ENCODE measurements at regions of chr2 and their contacts with region 1.

Region 1: GRCh38 chr2:231965102-231965501 is 3.6 kb downstream of the DIS3L2 start:
- DNase-seq: no peak

Region 2: DNA sequence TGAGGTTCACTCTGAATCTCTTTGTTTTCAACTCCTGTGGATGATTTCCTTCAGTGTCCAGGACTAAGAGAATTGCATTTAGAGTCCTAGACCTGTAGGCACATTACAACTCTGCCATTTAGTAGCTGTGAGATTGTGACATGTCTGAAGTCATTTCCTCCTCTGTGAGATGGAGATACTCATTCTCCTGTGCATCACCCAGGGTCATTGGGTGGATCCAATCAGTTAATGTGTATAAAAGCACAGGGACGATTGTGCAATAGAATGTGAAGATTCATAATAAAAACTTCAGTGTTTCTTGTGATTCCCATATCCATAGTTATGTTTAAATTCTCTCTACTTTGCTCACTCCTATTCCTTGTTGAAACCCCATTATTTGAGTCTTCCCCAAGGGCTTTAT is 110.0 kb after region 1 on chr2:
- intact Hi-C with region 1: no loop called
- DNase-seq: no peak

Region 3: DNA sequence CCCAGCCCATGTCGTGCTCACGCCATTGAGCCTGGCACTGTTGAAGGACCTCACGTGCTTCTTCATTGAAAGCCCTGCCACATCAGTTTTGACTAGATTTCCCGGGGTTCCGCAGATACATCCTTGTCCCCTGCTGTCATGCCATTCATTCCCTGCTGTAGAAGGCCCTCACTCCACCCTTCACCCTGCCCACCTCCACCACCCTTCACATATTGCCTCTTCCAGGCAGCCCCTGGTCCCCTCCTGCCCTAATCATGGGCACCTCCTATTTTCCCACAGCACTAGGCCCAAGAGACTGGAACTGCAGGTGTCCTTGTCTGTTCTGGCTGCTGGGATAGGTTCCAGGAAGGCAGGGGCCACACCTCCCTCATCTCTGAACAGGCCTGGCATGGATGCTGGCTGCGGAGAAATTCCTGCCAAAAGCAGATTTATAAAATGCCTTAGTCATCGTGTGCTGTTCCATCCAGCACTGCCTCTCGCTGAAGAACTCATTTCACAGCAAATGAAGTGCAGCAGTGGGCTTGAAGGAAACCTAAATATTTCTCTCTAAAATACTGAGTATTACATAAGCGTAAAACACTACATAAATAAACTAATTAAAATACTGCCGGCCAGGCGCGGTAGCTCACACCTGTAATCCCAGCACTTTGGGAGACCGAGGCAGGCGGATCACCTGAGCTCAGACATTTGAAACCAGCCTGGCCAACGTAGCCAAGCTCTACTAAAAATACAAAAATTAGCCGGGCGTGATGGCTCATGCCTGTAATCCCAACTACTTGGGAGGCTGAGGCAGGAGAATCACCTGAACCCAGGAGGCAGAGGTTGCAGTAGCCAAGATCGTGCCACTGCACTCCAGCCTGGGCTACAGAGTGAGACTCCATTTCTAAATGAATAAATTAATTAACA is 623.8 kb after region 1 on chr2:
- intact Hi-C with region 1: loop called in 1 of 2 experiments (anchors 5 kb)
- DNase-seq: no peak

Measured in posterior vena cava (tissue), 2 donors.